Activated T-helper 1 cell treated with anti-CD3 and anti-CD28 coated beads, Interleukin-12 subunit alpha, Interleukin-12 subunit beta, Interleukin-2, Interleukin-4 antibody, amounts not matched to agents 30 ng/mL and 10 ng/mL and 1 ng/mL, durations not matched to agents 14 hours and 24 hours and 36 hours (primary cell): ENCODE measurements at regions of chr6 and their contacts with region 1.

Region 1: DNA sequence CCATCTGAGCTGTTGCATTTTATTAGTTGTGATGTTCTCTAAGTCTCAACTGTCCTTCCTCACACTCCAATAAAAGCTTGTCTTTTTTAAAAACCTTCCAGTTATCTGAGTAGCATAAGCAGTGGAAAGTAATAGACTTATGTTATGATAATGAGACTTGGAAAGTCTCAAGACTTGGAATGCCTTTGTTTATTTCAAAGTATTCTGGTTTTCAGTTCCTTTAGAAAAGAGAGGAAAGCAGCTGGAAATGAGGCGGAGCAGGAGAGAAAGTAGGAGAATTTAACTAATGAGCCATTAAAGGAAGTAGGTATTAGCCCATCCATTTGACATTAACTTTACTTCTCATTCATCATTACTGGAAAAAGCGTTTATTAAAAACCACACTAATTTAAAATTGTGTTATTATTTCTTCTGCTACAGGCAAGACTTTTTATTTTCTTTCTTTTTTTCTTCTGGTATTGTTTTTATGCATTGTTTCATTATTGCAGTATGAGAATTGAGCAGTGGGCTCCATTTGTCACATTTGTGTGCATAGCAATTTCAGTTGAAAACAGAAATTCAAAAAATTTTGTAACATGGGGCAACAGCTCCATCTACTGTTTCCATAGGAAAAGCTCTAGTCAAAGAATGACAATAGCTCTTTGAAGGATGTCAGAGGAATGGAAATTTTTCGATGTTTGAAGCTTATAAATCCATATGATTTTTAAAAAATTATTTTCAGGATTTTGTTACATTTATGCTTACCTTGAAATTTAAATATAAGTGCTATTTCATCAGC is 194.8 kb downstream of the COL9A1 start:
- DNase-seq: no peak
- H3K4me3 Mint-ChIP-seq: no peak overlapping the region
- H3K27ac Mint-ChIP-seq: no peak overlapping the region
- H3K4me1 Mint-ChIP-seq: no peaks in the 10 kb centered on the region
- H3K27me3 Mint-ChIP-seq: peaks cover 5% of the 10 kb centered on the region

Region 2: DNA sequence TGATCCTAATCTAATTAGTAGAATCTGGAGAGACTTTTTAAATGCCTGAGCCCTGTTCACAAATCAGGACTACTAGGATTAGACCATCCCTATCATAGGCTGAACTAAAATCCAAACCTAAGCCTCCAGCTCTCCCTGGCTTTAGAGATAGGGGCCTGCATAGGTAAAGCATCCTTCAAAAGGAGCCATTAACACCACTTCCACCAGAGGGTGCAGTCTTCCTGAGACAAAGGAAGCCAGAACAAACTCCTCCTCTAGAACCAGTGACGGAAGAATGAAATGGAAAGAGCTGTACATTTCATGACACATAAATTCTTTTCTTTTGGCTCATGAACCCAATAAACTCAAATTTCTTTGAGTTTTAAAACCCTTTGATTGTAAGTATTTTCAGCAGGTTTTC is 1764.1 kb before region 1 on chr6:
- intact Hi-C with region 1: loop called (anchors 5 kb)
- DNase-seq: no peak
- H3K4me3 Mint-ChIP-seq: no peak overlapping the region
- H3K27ac Mint-ChIP-seq: no peak overlapping the region
- H3K4me1 Mint-ChIP-seq: no peaks in the 10 kb centered on the region
- H3K27me3 Mint-ChIP-seq: no peaks in the 10 kb centered on the region

Region 3: GRCh38 chr6:68634726-68635411 is 1473.2 kb before region 1 on chr6 and contains the start of gene ADGRB3:
- intact Hi-C with region 1: loop called (anchors 2 kb)
- DNase-seq: peak; percentile 11
- H3K4me3 Mint-ChIP-seq: peak within 1 kb of the TSS; percentile 80
- H3K27ac Mint-ChIP-seq: peak within 1 kb of the TSS; percentile 31
- H3K4me1 Mint-ChIP-seq: peaks cover 25% of the 10 kb centered on the region
- H3K27me3 Mint-ChIP-seq: peaks cover 49% of the 10 kb centered on the region
- total RNA-seq, gene ADGRB3: not detected in 2 replicates

Region 4: GRCh38 chr6:69732640-69733039 is 375.4 kb before region 1 on chr6:
- intact Hi-C with region 1: loop called (anchors 2 kb)
- DNase-seq: no peak
- H3K4me3 Mint-ChIP-seq: no peak overlapping the region
- H3K27ac Mint-ChIP-seq: no peak overlapping the region
- H3K4me1 Mint-ChIP-seq: no peaks in the 10 kb centered on the region
- H3K27me3 Mint-ChIP-seq: no peaks in the 10 kb centered on the region

Region 5: DNA sequence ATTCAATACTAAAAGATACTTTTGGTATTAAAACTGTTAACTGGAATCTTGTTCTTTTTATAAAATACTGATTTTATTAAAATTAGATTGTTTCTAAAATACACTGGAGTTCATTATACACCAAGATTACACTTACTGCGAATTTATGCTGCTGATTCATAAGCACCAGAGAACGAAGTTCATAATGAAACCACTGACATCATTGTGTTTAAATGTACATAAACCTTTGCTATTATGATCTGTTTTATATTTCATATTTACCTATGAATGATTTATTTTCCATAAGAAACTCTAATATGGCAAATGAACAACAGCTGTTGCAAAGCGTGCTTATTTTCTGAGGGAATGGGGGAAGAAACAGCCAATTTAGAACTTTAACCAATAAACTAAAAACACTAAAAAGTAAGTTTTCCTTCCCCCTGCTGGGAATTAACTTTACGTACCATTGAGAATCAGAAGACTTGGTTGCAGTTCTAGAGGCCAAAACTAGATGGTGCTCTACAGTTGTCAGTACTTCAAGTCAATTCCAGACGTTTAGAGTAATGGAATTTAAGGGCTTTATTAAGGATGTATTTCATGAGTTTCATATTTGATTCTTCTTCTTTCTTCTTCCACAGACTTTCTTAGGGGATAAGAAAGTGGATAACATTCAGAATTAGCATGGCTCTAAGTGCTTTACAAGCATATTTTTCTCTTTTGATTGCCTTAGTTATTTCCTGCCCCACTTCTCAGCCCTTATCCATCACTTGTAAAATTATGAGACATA is 272.4 kb before region 1 on chr6:
- intact Hi-C with region 1: loop called (anchors 2 kb)
- DNase-seq: no peak
- H3K4me3 Mint-ChIP-seq: no peak overlapping the region
- H3K27ac Mint-ChIP-seq: no peak overlapping the region
- H3K4me1 Mint-ChIP-seq: peaks cover 9% of the 10 kb centered on the region
- H3K27me3 Mint-ChIP-seq: peaks cover 29% of the 10 kb centered on the region